Gastrocnemius medialis (tissue), 4 donors: ENCODE measurements at regions of chr19 and their contacts with region 1.

Region 1: DNA sequence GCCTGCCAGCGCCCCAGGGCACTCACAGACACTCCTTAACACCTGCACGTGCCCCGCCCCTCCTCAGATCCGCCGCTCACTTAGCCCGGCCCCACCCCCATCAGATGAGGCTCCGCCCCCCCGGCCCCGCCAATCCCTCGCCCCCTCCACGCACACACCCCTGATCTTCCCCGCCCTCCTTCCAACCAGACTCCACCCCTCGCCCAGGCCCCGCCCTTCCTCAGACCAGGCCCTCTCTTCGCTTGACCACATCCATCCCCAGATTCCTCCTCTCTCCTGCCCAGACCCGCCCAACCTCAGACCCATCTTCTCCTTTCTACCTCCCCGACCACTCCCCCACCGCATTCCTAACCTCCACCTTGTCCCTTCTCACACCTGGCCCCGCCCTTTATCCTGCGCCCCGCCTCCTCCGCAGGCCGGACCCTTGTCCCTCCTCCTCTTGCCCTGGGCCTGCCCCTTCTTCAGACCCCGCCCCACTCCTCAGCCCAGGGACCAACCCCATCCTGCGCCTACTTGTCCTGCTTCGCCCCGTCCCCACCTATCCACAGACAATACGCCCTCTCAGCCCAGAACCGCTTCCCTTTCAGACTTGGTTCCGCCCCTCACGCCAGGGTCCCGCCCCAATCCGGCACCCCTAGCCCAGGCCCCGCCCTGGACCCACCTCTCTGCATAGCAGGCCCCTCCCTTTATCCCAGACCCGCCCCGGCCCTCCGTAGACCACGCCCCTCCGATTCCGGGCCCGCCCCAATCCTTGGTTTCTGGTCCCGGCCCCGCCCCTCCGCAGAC is 452 bp upstream of the KLHL26 start:
- DNase-seq: peak; percentile 97 to 98
- ATAC-seq: peak; percentile 91
- H3K4me3 ChIP-seq: peak overlapping the region; percentile 59 to 99 (median 83)
- H3K27ac ChIP-seq: peak overlapping the region; percentile 85 to 98 (median 92)
- H3K4me1 ChIP-seq: peaks cover 12 to 17% of the 10 kb centered on the region in 2 donors
- H3K27me3 ChIP-seq: no peaks in the 10 kb centered on the region
- CTCF ChIP-seq: no peak
- POLR2A ChIP-seq: no peak

Region 2: GRCh38 chr19:18683213-18683939 is 47.0 kb after region 1 on chr19 and contains the start of gene CRTC1:
- in situ Hi-C with region 1: no loop called
- intact Hi-C with region 1: loop called (anchors 1 kb)
- DNase-seq: peak; percentile 76 to 87
- ATAC-seq: peak; percentile 91 to 93
- H3K4me3 ChIP-seq: peak within 1 kb of the TSS; percentile 52 to 65 (median 58)
- H3K27ac ChIP-seq: peak within 1 kb of the TSS; percentile 87 to 93 (median 90)
- H3K4me1 ChIP-seq: peaks cover 11 to 19% of the 10 kb centered on the region in 2 donors
- H3K27me3 ChIP-seq: no peaks in the 10 kb centered on the region
- CTCF ChIP-seq: no peak
- POLR2A ChIP-seq: peak; percentile 69 to 79
- total RNA-seq, gene CRTC1: 2.8 to 8.8 (median 3.7) TPM

Region 3: GRCh38 chr19:19320362-19321142 is 684.2 kb after region 1 on chr19 and contains the starts of genes MAU2 and SUGP1:
- in situ Hi-C with region 1: no loop called
- intact Hi-C with region 1: loop called (anchors 10 kb)
- DNase-seq: peak; percentile 83 to 87
- ATAC-seq: peak; percentile 88 to 97
- H3K4me3 ChIP-seq: peak within 1 kb of the TSS; percentile 80 to 96 (median 93)
- H3K27ac ChIP-seq: peak within 1 kb of the TSS; percentile 88 to 98 (median 92)
- H3K4me1 ChIP-seq: peaks cover 48 to 57% of the 10 kb centered on the region in 2 donors
- H3K27me3 ChIP-seq: no peaks in the 10 kb centered on the region
- CTCF ChIP-seq: peak in 4 of 5 experiments; percentile 43 to 62 (median 48)
- POLR2A ChIP-seq: peak; percentile 28 to 75
- total RNA-seq, gene MAU2: 31.3 to 48.5 (median 41.7) TPM
- total RNA-seq, gene SUGP1: 29.7 to 51.0 (median 39.8) TPM